Esophagus muscularis mucosa (tissue), 4 donors: ENCODE measurements at regions of chr6 and their contacts with region 1.

Region 1: DNA sequence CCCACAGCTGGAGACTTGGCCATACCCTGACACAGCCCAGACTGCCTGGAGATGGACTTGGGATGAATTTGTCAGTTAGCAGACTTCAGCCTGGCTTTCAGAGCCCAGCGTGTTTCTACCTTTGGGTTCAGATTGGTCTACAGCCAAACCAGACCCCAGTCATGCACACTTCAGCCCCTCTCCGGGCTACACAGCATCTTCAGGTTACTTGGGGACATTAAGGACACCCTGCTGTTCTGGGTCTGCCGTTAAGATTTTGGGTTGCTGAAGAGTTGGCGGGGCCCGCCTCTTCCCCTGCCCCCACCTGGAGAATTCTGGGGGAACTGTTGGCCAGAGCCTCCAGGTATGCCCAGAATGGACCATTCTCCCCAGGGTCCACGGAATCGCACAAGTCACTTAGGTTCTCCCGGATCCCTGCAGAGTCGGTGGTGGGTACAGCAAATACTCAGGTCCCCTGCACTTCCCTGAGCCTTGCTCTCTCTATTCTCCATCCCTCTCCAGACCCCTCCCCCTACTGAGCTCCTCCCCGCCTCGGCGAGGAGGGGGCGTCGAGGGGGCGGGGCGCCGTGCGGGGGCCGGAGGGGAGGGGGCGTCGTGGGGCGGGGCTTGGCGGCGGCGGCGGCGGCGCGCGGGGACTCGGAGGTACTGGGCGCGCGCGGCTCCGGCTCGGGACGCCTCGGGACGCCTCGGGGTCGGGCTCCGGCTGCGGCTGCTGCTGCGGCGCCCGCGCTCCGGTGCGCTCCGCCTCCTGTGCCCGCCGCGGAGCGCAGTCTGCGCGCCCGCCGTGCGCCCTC is at the start of gene PTK7:
- DNase-seq: no peak
- H3K4me3 ChIP-seq: peak within 1 kb of the TSS; percentile 49 to 64 (median 59)
- H3K27ac ChIP-seq: no peak within 1 kb of the TSS
- H3K4me1 ChIP-seq: peaks cover 8 to 26% (median 23%) of the 10 kb centered on the region in 4 donors
- H3K27me3 ChIP-seq: peaks cover 0 to 28% (median 5%) of the 10 kb centered on the region in 4 donors
- CTCF ChIP-seq: no peak
- EP300 ChIP-seq: no peak
- POLR2A ChIP-seq: no peak
- total RNA-seq, gene PTK7: 6.8 to 10.8 (median 8.0) TPM

Region 2: DNA sequence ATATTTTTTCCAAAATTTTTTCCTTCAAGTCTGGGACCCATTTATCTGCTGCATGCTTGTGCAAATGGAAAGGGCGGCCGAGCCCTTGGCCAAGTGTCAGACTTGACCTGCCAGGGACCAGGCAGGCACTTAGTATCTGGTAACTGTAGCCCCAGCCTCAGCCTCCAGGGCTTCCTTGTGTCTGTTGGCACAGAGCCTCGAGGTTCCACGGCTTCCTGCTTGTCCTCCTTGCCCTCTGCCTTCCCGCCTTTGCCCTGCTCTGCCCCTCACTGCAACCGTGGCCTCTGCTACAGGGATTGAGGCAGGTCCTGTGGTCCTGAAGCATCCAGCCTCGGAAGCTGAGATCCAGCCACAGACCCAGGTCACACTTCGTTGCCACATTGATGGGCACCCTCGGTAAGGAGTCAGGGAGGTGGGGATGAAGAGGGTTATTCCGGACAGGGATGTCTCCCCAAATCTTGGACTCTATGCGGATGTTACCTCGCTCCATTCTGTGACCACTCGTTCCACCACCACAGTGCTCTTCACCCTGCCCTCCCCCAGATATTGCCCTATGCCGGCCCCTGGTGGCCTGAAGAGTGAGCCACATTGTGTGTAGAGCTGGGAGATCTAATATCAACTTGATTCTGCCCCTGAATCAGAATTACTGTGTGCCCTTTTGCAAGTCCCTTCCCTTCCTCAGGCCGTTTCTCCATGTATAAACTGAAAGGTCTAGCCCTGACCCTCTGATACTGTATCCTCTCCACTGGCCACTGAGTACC is 53.7 kb after region 1 on chr6:
- intact Hi-C with region 1: loop called (anchors 5 kb)
- DNase-seq: no peak
- H3K4me3 ChIP-seq: no peak overlapping the region
- H3K27ac ChIP-seq: no peak overlapping the region
- H3K4me1 ChIP-seq: peaks cover 0 to 14% (median 4%) of the 10 kb centered on the region in 4 donors
- H3K27me3 ChIP-seq: no peaks in the 10 kb centered on the region
- CTCF ChIP-seq: peak; percentile 19 to 42 (median 36)
- EP300 ChIP-seq: no peak
- POLR2A ChIP-seq: no peak